Right cardiac atrium (tissue), 5 donors: ENCODE measurements at regions of chr11 and their contacts with region 1.

Region 1: DNA sequence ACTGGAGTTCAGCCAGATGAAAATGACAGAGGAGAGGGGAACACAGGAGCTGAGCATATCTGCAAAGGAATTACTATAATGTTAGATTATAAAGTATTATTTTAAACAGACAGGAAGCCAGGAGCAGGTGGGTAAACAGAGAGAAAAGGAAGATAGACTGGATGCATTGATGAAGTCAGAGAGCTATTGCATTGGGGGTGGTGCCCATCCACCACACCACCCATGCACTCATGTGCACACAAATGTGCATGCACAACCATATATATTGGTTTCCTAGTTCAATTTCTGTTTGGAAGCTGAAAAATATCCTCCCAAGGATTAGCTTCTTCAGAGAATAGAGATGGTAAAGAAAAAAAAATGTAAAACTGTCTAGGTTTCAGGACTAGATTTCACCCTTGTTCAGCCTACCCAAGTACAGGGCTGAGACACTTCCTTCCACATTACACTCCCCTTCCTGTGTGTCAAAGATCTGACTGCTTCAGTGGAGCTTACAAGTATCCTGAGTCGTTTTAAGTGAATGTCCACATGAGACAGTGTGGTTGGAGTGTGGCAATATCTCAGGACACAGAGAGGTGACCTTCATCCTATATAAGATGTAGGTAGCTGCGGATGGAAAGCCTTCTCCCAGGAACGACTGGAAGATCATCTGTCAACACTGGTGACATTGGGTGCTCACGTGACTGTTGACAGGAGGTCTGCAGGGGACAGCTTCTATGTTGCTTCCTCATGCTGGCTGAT is 12.2 kb upstream of the SMPD1 start:
- DNase-seq: no peak
- ATAC-seq: peak; percentile 34 to 80
- H3K4me3 ChIP-seq: no peak overlapping the region
- H3K27ac ChIP-seq: peak overlapping the region; percentile 15
- H3K4me1 ChIP-seq: no peaks in the 10 kb centered on the region
- H3K27me3 ChIP-seq: no peaks in the 10 kb centered on the region

Region 2: GRCh38 chr11:6321961-6322362 is 56.1 kb before region 1 on chr11:
- intact Hi-C with region 1: no loop called
- DNase-seq: no peak
- ATAC-seq: no peak
- H3K4me3 ChIP-seq: no peak overlapping the region
- H3K27ac ChIP-seq: peak overlapping the region; percentile 100
- H3K4me1 ChIP-seq: peaks cover 3% of the 10 kb centered on the region
- H3K27me3 ChIP-seq: no peaks in the 10 kb centered on the region

Region 3: DNA sequence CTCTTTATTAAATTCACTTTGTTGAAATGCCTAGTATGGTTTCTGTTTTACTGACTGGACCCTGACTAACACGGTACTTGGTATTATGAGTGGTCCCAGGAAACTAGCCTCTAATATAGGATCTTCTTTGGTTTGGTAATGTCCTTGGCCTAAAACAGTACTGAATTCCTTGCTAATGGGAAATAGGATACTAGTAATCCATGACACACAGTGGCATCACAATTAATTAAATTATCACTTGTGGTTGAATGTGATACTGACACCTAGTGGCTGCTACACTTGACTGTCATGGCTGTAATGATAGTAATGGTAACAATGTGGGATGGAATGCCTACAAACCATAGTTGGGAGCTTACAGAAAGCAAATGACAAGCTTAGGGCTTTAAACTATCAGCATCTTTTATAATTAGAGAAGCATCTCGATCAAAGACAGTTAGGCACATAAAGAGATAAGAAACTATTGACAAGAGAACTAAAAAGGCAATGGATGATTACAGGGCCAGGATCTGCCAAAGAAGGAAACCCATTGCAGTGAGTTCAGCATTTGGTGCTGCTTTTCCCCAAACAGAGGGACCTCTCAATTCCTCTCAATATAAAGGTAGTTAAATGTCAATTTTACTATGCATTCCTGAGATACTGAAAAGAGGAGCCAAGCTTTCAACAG is 127.6 kb after region 1 on chr11:
- intact Hi-C with region 1: loop called in 2 of 4 experiments (anchors 2 to 5 kb)
- DNase-seq: no peak
- ATAC-seq: peak; percentile 61 to 75
- H3K4me3 ChIP-seq: no peak overlapping the region
- H3K27ac ChIP-seq: no peak overlapping the region
- H3K4me1 ChIP-seq: no peaks in the 10 kb centered on the region
- H3K27me3 ChIP-seq: no peaks in the 10 kb centered on the region